Activated CD4-positive, alpha-beta T cell treated with anti-CD3 and anti-CD28 coated beads, Interleukin-2, amount 10 ng/mL, durations not matched to agents 7 days and 5 days (primary cell): ENCODE measurements at regions of chr11 and their contacts with region 1.

Region 1: GRCh38 chr11:72642884-72643511 is 31.2 kb downstream of the PDE2A start:
- DNase-seq: peak; percentile 55
- H3K4me3 Mint-ChIP-seq: no peak overlapping the region
- H3K27ac Mint-ChIP-seq: no peak overlapping the region
- H3K4me1 Mint-ChIP-seq: no peaks in the 10 kb centered on the region
- H3K27me3 Mint-ChIP-seq: peaks cover 5% of the 10 kb centered on the region

Region 2: DNA sequence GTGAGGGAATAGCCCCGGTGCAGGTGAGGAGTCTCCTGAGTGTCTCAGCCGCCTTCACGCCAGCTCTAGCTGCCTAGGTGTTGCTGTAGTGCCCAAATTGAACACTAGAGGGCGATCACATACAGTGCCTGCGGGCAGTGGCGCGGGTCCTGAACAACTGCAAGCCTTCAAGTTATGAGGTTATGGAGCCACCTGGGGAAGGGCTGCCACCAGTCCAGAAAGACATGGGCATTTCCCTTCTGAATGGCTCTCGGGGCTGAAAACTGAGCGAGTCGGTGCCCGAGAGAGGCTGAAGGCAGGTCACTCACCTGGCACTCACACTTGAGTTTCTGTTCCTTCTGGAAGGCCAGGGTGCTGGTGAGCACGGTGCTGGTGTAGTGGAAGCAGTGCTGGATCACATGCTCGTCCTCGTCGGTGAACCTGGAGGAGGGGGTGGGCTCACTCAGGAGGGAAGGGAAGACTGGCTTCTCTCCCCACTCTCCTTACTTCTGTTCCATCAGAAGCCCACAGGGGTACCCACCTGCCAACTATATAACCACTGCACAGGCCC is 57.2 kb before region 1 on chr11:
- CTCF ChIA-PET with region 1: interaction called, 10 read pairs
- POLR2A ChIA-PET with region 1: no interaction called
- DNase-seq: peak; percentile 82
- H3K4me3 Mint-ChIP-seq: peak overlapping the region; percentile 43
- H3K27ac Mint-ChIP-seq: no peak overlapping the region
- H3K4me1 Mint-ChIP-seq: peaks cover 28% of the 10 kb centered on the region
- H3K27me3 Mint-ChIP-seq: peaks cover 47% of the 10 kb centered on the region

Region 3: DNA sequence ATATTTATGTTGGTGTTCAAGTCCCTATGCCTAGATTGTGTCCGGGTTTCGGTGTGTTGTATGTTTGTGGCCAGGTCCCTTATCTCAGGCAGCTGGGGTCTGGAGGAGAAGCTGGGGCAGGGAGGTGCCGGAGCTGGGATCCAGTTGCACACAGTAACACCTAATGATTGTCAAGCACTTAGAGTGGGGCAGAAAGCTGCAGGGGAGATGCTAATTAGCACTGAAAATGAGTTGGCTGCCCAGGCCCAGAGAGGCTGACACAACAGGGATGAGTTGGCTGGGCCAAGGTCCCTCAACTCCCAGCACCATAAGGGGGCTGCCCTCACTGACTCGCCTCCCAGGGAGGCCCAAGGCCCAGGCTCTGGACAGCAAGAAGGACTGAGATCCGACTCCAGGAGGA is 19.0 kb after region 1 on chr11:
- CTCF ChIA-PET with region 1: no interaction called
- POLR2A ChIA-PET with region 1: no interaction called
- DNase-seq: no peak
- H3K4me3 Mint-ChIP-seq: no peak overlapping the region
- H3K27ac Mint-ChIP-seq: no peak overlapping the region
- H3K4me1 Mint-ChIP-seq: no peaks in the 10 kb centered on the region
- H3K27me3 Mint-ChIP-seq: peaks cover 8% of the 10 kb centered on the region

Region 4: GRCh38 chr11:73141848-73142286 is 498.9 kb after region 1 on chr11:
- CTCF ChIA-PET with region 1: no interaction called
- POLR2A ChIA-PET with region 1: no interaction called
- DNase-seq: peak; percentile 59
- H3K4me3 Mint-ChIP-seq: peak overlapping the region; percentile 97
- H3K27ac Mint-ChIP-seq: peak overlapping the region; percentile 94
- H3K4me1 Mint-ChIP-seq: peaks cover 61% of the 10 kb centered on the region
- H3K27me3 Mint-ChIP-seq: no peaks in the 10 kb centered on the region